ENCODE measurements at regions of chr1 and their contacts with region 1.

Region 1: GRCh38 chr1:115138968-115139367 is 49.7 kb upstream of the TSPAN2 start:
- DNase-seq: peak; percentile 88 to 93
- ATAC-seq: peak; percentile 88 to 93 (median 88)
- H3K4me3 ChIP-seq: no peak overlapping the region
- H3K27ac ChIP-seq: no peak overlapping the region
- H3K4me1 ChIP-seq: peaks cover 11% of the 10 kb centered on the region
- H3K27me3 ChIP-seq: no peaks in the 10 kb centered on the region
- CTCF ChIP-seq: peak; percentile 93

Region 2: GRCh38 chr1:115153966-115154557 is 15.1 kb after region 1 on chr1:
- intact Hi-C with region 1: no loop called
- DNase-seq: no peak
- ATAC-seq: no peak
- H3K4me3 ChIP-seq: no peak overlapping the region
- H3K27ac ChIP-seq: no peak overlapping the region
- H3K4me1 ChIP-seq: no peaks in the 10 kb centered on the region
- H3K27me3 ChIP-seq: no peaks in the 10 kb centered on the region
- CTCF ChIP-seq: no peak

Region 3: DNA sequence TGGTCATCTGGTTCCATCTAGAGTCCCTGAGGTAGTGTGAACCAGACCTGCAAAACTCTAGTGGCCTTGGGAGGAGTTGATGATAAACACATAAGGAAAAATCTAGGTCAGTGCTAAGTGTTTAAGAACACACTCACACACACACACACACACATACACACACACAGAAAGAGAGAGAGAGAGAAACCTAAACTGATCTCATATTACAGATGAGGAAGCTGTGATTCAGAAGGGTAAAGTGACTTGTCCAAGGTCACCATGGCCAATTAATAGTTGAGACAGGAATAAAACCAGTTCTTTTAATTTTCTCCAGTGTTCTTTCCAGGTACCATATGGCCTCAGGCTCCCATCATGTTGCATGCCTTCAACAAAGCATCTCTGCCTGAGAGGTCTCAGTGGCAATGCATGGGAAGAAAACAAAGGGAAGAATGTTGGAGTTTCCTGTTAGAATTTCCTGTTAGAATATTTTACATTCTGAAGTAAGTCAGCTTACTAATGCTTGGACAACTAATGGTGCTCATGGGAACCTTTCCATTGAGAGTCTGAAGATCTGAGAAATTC is 27.6 kb after region 1 on chr1:
- intact Hi-C with region 1: no loop called
- DNase-seq: no peak
- ATAC-seq: no peak
- H3K4me3 ChIP-seq: no peak overlapping the region
- H3K27ac ChIP-seq: no peak overlapping the region
- H3K4me1 ChIP-seq: peaks cover 11% of the 10 kb centered on the region
- H3K27me3 ChIP-seq: no peaks in the 10 kb centered on the region
- CTCF ChIP-seq: no peak

Region 4: GRCh38 chr1:115179397-115179835 is 40.4 kb after region 1 on chr1:
- intact Hi-C with region 1: loop called in 1 of 2 experiments (anchors 2 kb)
- DNase-seq: peak; percentile 75 to 85
- ATAC-seq: peak; percentile 86 to 92 (median 90)
- H3K4me3 ChIP-seq: no peak overlapping the region
- H3K27ac ChIP-seq: peak overlapping the region; percentile 86
- H3K4me1 ChIP-seq: peaks cover 28% of the 10 kb centered on the region
- H3K27me3 ChIP-seq: no peaks in the 10 kb centered on the region
- CTCF ChIP-seq: no peak

Region 5: GRCh38 chr1:115337633-115338456 is 198.9 kb after region 1 on chr1 and contains the start of gene NGF:
- intact Hi-C with region 1: loop called in 1 of 2 experiments (anchors 5 kb)
- DNase-seq: peak; percentile 53 to 62
- ATAC-seq: peak; percentile 66 to 86 (median 80)
- H3K4me3 ChIP-seq: peak within 1 kb of the TSS; percentile 60
- H3K27ac ChIP-seq: peak within 1 kb of the TSS; percentile 24
- H3K4me1 ChIP-seq: peaks cover 5% of the 10 kb centered on the region
- H3K27me3 ChIP-seq: peaks cover 0 to 20% (median 7%) of the 10 kb centered on the region in 3 donors
- CTCF ChIP-seq: no peak
- total RNA-seq, gene NGF: 0.27 to 1.4 (median 0.77) TPM

Region 6: DNA sequence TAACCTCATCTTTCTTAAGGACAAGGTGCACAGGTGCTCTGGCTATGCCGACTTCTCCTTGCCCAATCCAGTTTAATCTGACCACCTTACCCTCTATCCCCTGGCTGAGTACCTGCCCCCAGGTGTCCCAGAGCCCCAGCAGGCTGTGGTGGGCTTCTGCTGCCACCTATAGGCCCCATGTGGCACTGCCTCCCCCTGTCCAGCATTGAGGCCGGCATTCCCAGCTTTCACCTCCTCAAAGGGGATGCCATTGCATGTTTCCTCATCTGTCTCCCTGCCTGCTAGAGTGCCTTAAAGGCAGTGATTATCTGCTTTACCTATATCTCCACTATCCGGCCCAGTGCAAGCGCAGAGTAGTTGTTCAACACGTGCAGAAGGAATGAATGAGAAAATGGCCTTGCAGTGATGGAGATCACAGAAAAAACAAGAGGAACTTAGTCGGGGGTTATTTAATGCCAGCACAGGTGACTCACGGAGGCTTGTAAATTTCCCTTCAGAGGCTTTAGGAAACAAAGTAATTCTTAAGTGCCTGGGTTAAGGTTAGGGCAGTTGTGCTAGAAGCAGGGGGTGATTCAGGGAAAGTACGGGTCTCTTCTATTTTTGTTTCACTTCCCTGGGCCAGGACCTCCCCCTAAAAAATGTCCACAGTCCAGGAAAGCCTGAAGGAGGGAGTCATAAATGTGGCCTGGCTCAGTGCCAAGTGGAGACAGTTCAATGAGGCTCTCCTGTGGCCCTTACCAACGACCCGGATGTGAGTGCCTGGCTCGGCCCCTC is 330.9 kb after region 1 on chr1:
- intact Hi-C with region 1: loop called (anchors 1 to 2 kb)
- DNase-seq: peak; percentile 29 to 60
- ATAC-seq: peak; percentile 75 to 93 (median 86)
- H3K4me3 ChIP-seq: no peak overlapping the region
- H3K27ac ChIP-seq: no peak overlapping the region
- H3K4me1 ChIP-seq: no peaks in the 10 kb centered on the region
- H3K27me3 ChIP-seq: no peaks in the 10 kb centered on the region
- CTCF ChIP-seq: peak; percentile 87

Region 7: DNA sequence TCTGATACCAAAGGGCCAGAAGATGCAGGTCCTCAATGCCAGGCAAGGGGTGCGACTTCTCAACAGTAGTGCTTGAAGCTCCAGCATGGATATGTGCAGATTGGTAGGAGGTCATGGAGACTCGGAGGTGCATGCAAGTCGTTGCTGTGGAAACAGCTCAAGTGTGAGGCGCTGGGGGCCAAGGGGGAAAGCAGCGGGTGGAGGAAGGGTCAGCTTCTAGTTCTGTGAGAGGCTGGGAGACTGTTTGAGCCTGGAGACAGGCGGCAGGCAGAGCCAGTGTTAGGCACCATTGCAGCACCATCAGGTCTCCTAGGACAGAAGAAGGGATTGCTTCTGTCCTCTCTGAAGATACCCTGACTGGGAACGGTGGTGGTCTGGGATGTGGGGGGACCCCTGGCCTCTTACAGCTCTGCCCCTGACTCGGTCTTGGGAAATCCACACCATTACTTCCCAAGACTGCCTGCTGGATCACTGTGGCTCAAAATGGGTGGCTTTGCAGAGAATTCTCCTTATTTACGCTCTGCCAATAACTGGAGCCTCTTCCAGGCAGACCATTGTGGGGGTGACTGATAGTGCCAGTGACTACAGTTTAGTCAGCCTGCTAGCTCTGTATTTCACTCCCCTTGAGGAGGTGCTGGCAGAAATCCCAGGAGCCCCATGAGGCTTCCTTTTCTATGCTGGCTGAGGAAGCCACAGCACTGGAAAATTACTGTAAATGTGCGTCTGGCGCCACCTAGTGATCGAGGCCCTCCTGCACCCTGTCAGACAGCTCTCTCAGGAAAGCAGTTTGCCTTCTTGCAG is 456.5 kb after region 1 on chr1:
- intact Hi-C with region 1: loop called (anchors 2 to 5 kb)
- DNase-seq: peak; percentile 85 to 90
- ATAC-seq: peak; percentile 76 to 88 (median 84)
- H3K4me3 ChIP-seq: no peak overlapping the region
- H3K27ac ChIP-seq: no peak overlapping the region
- H3K4me1 ChIP-seq: peaks cover 4% of the 10 kb centered on the region
- H3K27me3 ChIP-seq: no peaks in the 10 kb centered on the region
- CTCF ChIP-seq: peak; percentile 88

Measured in psoas muscle (tissue), 8 donors.